ENCODE measurements at regions of chr16 and their contacts with region 1.

Region 1: GRCh38 chr16:24070851-24071250 is 185.3 kb upstream of the CACNG3 start:
- H3K4me3 ChIP-seq: no peak overlapping the region
- H3K27ac ChIP-seq: no peak overlapping the region
- H3K4me1 ChIP-seq: no peaks in the 10 kb centered on the region
- CTCF ChIP-seq: no peak

Region 2: GRCh38 chr16:23924128-23924527 is 146.7 kb before region 1 on chr16:
- CTCF ChIA-PET with region 1: no interaction called
- POLR2A ChIA-PET with region 1: no interaction called
- H3K4me3 ChIP-seq: no peak overlapping the region
- H3K27ac ChIP-seq: no peak overlapping the region
- H3K4me1 ChIP-seq: no peaks in the 10 kb centered on the region
- CTCF ChIP-seq: no peak

Region 3: DNA sequence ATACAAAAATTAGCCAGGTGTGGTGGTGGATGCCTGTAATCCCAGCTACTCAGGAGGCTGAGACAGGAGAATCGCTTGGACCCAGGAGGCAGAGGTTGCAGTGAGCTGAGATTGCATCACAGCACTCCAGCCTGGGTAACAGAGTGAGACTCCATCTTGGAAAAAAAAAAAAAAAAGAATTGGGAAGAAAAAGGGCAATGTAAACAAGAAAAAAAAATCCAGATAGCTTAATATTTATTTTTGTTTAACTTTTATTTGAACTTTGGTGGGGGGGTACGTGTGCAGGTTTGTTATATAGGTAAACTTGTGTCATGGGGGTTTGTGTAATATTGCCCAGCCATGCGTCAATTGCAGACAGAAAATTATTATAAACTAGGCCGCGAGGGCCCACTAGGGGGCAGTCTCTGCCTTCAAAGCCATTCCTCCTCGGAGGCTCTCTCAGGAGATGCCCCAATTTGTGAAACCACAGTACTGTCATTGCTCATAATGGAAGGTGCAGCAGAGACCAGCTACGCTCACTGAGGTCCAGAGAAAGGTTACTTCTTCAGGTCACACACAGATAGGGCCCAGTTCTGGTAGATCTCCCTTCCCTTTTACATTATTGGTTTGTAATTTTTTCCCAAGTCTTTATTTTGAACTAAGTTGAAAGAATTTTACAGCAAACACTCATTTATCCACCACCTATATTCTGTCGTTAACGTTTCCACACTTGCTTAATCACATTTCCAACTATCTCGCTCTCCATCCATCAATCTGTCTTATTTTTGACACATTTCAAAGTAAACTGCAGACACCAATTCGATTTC is 28.8 kb before region 1 on chr16:
- CTCF ChIA-PET with region 1: interaction called, 16 read pairs
- POLR2A ChIA-PET with region 1: no interaction called
- H3K4me3 ChIP-seq: no peak overlapping the region
- H3K27ac ChIP-seq: no peak overlapping the region
- H3K4me1 ChIP-seq: no peaks in the 10 kb centered on the region
- CTCF ChIP-seq: peak; percentile 68

Region 4: DNA sequence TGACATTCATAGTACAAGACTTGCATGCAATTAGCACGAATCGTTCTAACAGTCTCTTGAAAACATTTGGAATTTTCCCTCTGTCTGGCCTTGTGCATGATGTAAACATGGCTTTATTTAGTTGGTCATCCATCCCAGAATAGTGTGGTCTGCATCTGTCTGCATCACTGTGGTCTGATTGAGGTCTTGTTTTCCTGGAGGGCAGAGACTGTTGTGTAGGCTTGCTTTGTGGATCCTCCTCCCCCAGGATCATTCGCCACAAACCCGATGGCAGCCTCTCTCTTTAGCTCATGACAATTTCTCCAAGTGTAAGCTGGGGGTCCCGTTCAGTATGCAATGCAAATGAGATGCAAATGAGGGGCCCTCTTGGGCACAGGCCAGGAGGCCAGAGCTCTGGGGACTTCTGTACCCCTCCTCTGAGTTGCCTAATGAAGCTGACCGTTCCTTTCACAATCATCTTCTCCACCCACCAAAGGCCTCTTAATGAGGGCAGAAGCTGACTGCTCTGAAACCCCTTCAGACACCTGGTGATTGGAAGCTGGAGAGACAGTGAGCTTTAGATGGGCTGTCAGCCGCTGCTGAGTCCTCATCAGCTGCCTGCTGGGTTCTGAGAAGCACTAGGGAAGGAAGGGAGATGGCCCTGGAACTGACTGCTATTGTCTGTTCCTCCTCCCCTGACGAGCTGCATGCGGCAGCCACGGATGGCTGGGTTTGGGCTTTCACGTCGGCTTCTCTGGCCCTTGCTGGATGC is 15.9 kb before region 1 on chr16:
- CTCF ChIA-PET with region 1: interaction called, 13 read pairs
- POLR2A ChIA-PET with region 1: no interaction called
- H3K4me3 ChIP-seq: no peak overlapping the region
- H3K27ac ChIP-seq: no peak overlapping the region
- H3K4me1 ChIP-seq: no peaks in the 10 kb centered on the region
- CTCF ChIP-seq: no peak

Region 5: DNA sequence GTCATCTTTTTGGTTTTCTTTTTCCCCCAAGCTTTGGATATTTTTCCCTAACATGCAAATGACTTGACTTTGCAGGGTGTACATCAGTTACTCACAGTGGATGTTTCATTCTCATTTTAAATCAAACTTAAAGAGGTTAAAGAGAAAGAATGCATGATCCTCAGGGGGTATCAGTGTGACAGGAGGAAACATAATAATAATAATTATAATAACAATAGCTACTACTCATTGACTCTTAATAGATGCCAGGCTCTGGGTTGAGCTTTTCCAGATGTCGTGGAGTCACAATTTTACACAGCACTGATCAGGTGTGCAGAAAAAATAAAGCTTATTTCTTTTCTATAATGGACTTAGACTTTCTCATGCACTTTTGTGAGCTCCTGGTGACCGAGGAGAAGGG is 28.0 kb after region 1 on chr16:
- CTCF ChIA-PET with region 1: interaction called, 17 read pairs
- POLR2A ChIA-PET with region 1: no interaction called
- H3K4me3 ChIP-seq: no peak overlapping the region
- H3K27ac ChIP-seq: no peak overlapping the region
- H3K4me1 ChIP-seq: no peaks in the 10 kb centered on the region
- CTCF ChIP-seq: no peak

Region 6: GRCh38 chr16:24253192-24253591 is 182.3 kb after region 1 on chr16:
- CTCF ChIA-PET with region 1: interaction called, 72 read pairs
- POLR2A ChIA-PET with region 1: no interaction called
- H3K4me3 ChIP-seq: no peak overlapping the region
- H3K27ac ChIP-seq: no peak overlapping the region
- H3K4me1 ChIP-seq: no peaks in the 10 kb centered on the region; the same call in 1 of the 2 replicates
- CTCF ChIP-seq: no peak

Region 7: DNA sequence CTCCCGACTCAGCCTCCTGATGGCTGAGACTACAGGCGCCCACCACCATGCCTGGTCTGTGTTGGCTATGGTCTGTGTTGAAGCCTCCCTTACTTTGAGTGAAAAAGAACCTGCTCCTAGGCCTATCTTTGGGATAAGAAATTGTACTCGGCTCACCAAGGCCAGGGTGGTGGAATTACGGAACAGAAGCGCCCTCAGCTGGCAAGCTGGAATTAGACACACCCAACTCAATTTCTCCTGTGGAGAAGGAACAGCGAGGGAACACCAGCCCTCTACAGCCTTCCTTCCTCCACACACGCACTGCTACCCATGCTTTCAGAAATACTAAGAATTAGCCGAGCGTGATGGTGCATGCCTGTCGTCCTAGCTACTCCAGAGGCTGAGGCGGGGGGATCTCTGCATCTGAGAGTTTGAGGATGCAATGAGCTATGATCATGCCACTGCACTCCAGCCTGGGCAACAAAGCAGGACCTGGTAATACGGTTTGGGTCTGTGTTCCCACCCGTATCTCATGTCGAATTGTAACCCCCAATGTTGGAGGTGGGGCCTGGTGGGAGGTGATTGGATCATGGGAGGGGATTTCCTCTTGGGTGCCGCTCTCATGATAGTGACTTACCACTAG is 428.5 kb after region 1 on chr16:
- CTCF ChIA-PET with region 1: interaction called, 30 read pairs
- POLR2A ChIA-PET with region 1: no interaction called
- H3K4me3 ChIP-seq: no peak overlapping the region
- H3K27ac ChIP-seq: no peak overlapping the region
- H3K4me1 ChIP-seq: no peaks in the 10 kb centered on the region
- CTCF ChIP-seq: peak; percentile 76